Heart right ventricle (tissue), 16 donors: ENCODE measurements at regions of chr22 and their contacts with region 1.

Region 1: GRCh38 chr22:38872172-38872830 is at the start of gene CBX6:
- DNase-seq: peak; percentile 97 to 98
- ATAC-seq: peak; percentile 85 to 91 (median 89)
- H3K4me3 ChIP-seq: peak within 1 kb of the TSS; percentile 67 to 96 (median 84)
- H3K27ac ChIP-seq: peak within 1 kb of the TSS; percentile 94 to 99 (median 98)
- H3K4me1 ChIP-seq: peaks cover 17 to 50% (median 42%) of the 10 kb centered on the region in 9 donors
- H3K27me3 ChIP-seq: no peaks in the 10 kb centered on the region
- CTCF ChIP-seq: no peak
- total RNA-seq, gene CBX6: 28.2 to 49.1 (median 37.3) TPM

Region 2: GRCh38 chr22:38777087-38777671 is 95.1 kb before region 1 on chr22:
- intact Hi-C with region 1: loop called in 1 of 10 experiments (anchors 10 kb)
- DNase-seq: no peak
- ATAC-seq: no peak
- H3K4me3 ChIP-seq: no peak overlapping the region
- H3K27ac ChIP-seq: no peak overlapping the region
- H3K4me1 ChIP-seq: peaks cover 4 to 22% (median 18%) of the 10 kb centered on the region in 9 donors
- H3K27me3 ChIP-seq: no peaks in the 10 kb centered on the region
- CTCF ChIP-seq: no peak

Region 3: GRCh38 chr22:38981992-38982927 is 110.0 kb after region 1 on chr22 and contains the start of gene APOBEC3B:
- intact Hi-C with region 1: loop called in 1 of 10 experiments (anchors 5 kb)
- DNase-seq: peak; percentile 30 to 90
- ATAC-seq: peak; percentile 96 to 99 (median 99)
- H3K4me3 ChIP-seq: peak within 1 kb of the TSS in 9 of 10 donors; percentile 28 to 64 (median 54)
- H3K27ac ChIP-seq: peak within 1 kb of the TSS in 6 of 10 donors; percentile 30 to 82 (median 35)
- H3K4me1 ChIP-seq: peaks cover 0 to 30% (median 12%) of the 10 kb centered on the region in 9 donors
- H3K27me3 ChIP-seq: no peaks in the 10 kb centered on the region
- CTCF ChIP-seq: no peak
- total RNA-seq, gene APOBEC3B: 0.55 to 6.4 (median 1.3) TPM

Region 4: DNA sequence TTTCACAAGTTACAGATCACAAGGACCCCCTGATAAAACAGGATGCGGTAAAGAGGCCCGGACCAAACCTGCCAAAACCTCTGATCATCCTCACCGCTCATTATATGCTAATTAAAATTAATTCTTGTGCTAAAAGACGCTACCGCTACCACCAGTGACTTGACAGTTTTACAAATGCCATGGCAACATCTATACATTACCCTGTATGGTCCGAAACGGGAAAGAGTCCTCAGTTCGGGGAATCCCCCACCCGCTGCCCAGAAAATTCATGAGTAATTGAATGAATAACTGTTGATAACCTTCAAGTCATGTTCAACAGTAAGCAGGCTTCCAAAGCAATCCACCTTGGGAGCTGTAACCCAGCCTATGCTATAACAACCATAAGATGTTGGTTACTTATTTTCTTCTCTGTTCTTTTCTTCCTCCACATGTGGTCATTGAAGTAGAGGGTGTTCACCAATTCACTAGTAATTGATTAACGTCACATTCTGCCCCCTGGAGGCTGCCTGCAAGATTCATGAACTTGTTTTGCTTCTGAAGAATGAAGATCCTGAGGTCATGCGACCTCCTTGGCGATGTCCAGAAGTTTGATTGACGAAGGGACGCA is 245.4 kb after region 1 on chr22:
- intact Hi-C with region 1: loop called in 7 of 10 experiments (anchors 2 to 10 kb)
- DNase-seq: peak in 1 of 2 donors; percentile 32
- ATAC-seq: no peak
- H3K4me3 ChIP-seq: no peak overlapping the region
- H3K27ac ChIP-seq: peak overlapping the region in 1 of 10 donors; percentile 59
- H3K4me1 ChIP-seq: peaks cover 0 to 13% (median 0%) of the 10 kb centered on the region in 9 donors
- H3K27me3 ChIP-seq: peaks cover 0 to 49% (median 23%) of the 10 kb centered on the region in 7 donors
- CTCF ChIP-seq: peak; percentile 8 to 57 (median 46)

Region 5: GRCh38 chr22:39135090-39135896 is 263.0 kb after region 1 on chr22:
- intact Hi-C with region 1: loop called in 1 of 10 experiments (anchors 10 kb)
- DNase-seq: peak; percentile 47 to 56
- ATAC-seq: peak; percentile 30 to 83 (median 64)
- H3K4me3 ChIP-seq: no peak overlapping the region
- H3K27ac ChIP-seq: no peak overlapping the region
- H3K4me1 ChIP-seq: peaks cover 4 to 33% (median 19%) of the 10 kb centered on the region in 9 donors
- H3K27me3 ChIP-seq: no peaks in the 10 kb centered on the region
- CTCF ChIP-seq: peak; percentile 19 to 63 (median 52)